CD8-positive, alpha-beta T cell (primary cell): ENCODE measurements at regions of chr4 and their contacts with region 1.

Region 1: GRCh38 chr4:56301181-56302076 is 85.9 kb downstream of the AASDH start:
- DNase-seq: peak; percentile 5 to 68 (median 51)
- ATAC-seq: peak; percentile 89
- H3K4me3 ChIP-seq: no peak overlapping the region
- H3K4me3 Mint-ChIP-seq: no peak overlapping the region
- H3K27ac ChIP-seq: no peak overlapping the region
- H3K27ac Mint-ChIP-seq: no peak overlapping the region
- H3K4me1 ChIP-seq: peaks cover 4% of the 10 kb centered on the region
- H3K4me1 Mint-ChIP-seq: peaks cover 9% of the 10 kb centered on the region
- H3K27me3 ChIP-seq: no peaks in the 10 kb centered on the region
- H3K27me3 Mint-ChIP-seq: no peaks in the 10 kb centered on the region
- CTCF ChIP-seq: peak; percentile 86

Region 2: DNA sequence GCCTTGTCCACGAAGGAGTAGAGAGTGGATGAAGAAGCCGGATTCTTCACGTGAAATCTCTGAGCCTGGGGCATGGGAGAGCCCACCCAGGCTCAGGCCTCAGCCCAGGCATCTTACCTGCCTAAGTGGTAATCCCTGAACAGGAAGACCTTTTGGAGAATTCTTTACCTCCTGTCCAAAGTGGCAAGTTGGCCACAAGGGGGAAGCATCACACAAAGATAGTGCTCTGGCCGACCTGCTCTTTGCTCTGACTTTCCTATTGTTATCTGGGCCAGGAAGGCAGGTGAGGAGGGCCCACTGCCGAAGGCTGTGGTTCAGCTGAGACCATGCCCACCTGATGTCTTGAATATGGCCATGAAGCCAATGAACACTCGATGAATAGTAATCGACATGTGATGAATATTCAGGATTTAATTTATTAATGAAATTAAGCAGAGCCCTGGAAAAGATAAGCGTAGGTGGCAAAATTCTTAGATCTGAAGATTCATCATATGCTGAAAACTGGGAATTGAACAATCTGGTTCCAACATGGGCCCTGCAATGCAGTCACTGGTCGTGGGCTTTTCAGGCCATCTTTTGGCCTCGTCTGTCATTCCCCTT is 1978.5 kb before region 1 on chr4:
- CTCF ChIA-PET with region 1: no interaction called
- POLR2A ChIA-PET with region 1: no interaction called
- intact Hi-C with region 1: loop called in 1 of 2 experiments (anchors 5 kb)
- DNase-seq: peak in 7 of 9 experiments; percentile 3 to 58 (median 42)
- ATAC-seq: peak; percentile 40
- H3K4me3 ChIP-seq: no peak overlapping the region
- H3K4me3 Mint-ChIP-seq: no peak overlapping the region
- H3K27ac ChIP-seq: no peak overlapping the region
- H3K27ac Mint-ChIP-seq: no peak overlapping the region
- H3K4me1 ChIP-seq: no peaks in the 10 kb centered on the region
- H3K4me1 Mint-ChIP-seq: no peaks in the 10 kb centered on the region
- H3K27me3 ChIP-seq: no peaks in the 10 kb centered on the region
- H3K27me3 Mint-ChIP-seq: no peaks in the 10 kb centered on the region
- CTCF ChIP-seq: peak; percentile 39

Region 3: DNA sequence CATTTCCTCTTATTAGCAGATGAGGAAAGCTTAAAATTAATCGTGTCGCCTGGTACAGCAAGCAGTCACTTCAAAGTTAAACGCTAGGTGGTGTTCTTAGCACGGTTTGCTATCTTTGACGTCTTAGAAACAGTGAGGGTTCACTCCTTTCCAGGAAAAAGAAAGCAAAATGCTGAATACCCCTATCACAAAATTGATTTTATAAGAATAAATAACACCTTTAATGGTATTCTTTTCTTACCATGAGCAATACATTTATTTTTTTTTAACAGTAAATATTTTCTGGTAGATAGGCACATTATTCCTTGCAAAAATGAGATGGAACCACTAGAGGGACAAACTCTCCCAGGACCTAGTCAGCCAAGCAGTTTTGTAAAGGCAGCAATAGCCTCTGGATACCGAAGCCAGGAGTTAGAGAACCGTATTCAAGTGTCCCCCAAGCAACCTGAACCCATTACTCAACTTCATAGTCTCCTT is 1329.9 kb before region 1 on chr4:
- CTCF ChIA-PET with region 1: no interaction called
- POLR2A ChIA-PET with region 1: no interaction called
- intact Hi-C with region 1: loop called in 1 of 2 experiments (anchors 2 kb)
- DNase-seq: peak in 2 of 9 experiments; percentile 21 to 44
- ATAC-seq: peak; percentile 51
- H3K4me3 ChIP-seq: no peak overlapping the region
- H3K4me3 Mint-ChIP-seq: no peak overlapping the region
- H3K27ac ChIP-seq: no peak overlapping the region
- H3K27ac Mint-ChIP-seq: no peak overlapping the region
- H3K4me1 ChIP-seq: no peaks in the 10 kb centered on the region
- H3K4me1 Mint-ChIP-seq: no peaks in the 10 kb centered on the region
- H3K27me3 ChIP-seq: no peaks in the 10 kb centered on the region
- H3K27me3 Mint-ChIP-seq: peaks cover 12% of the 10 kb centered on the region
- CTCF ChIP-seq: peak; percentile 63

Region 4: DNA sequence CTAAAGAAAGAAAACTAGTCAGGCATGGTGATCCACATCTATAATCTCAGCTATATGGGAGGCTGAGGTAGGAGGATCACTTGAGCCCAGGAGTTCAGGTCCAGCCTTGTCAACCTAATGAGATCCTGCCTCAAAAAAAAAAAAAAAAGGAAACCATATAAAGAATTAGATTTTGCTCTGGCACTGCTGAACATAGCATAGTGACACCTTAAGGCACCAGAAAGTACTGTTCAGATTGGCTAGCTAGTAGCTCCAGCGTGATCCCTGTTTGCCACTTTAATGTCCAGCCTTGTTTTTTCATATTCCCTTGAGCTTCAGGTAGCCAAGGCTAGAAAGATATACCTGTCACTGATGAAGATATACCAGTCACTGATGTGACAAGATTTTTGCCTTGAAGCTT is 413.8 kb before region 1 on chr4:
- CTCF ChIA-PET with region 1: no interaction called
- POLR2A ChIA-PET with region 1: no interaction called
- intact Hi-C with region 1: loop called in 1 of 2 experiments (anchors 5 kb)
- DNase-seq: no peak
- ATAC-seq: no peak
- H3K4me3 ChIP-seq: no peak overlapping the region
- H3K4me3 Mint-ChIP-seq: no peak overlapping the region
- H3K27ac ChIP-seq: no peak overlapping the region
- H3K27ac Mint-ChIP-seq: no peak overlapping the region
- H3K4me1 ChIP-seq: no peaks in the 10 kb centered on the region
- H3K4me1 Mint-ChIP-seq: peaks cover 27% of the 10 kb centered on the region
- H3K27me3 ChIP-seq: no peaks in the 10 kb centered on the region
- H3K27me3 Mint-ChIP-seq: no peaks in the 10 kb centered on the region
- CTCF ChIP-seq: no peak

Region 5: GRCh38 chr4:56129431-56129861 is 172.0 kb before region 1 on chr4:
- CTCF ChIA-PET with region 1: no interaction called
- POLR2A ChIA-PET with region 1: no interaction called
- intact Hi-C with region 1: loop called in 1 of 2 experiments (anchors 10 kb)
- DNase-seq: peak in 2 of 9 experiments; percentile 3 to 5
- ATAC-seq: no peak
- H3K4me3 ChIP-seq: no peak overlapping the region
- H3K4me3 Mint-ChIP-seq: no peak overlapping the region
- H3K27ac ChIP-seq: no peak overlapping the region
- H3K27ac Mint-ChIP-seq: no peak overlapping the region
- H3K4me1 ChIP-seq: no peaks in the 10 kb centered on the region
- H3K4me1 Mint-ChIP-seq: no peaks in the 10 kb centered on the region
- H3K27me3 ChIP-seq: no peaks in the 10 kb centered on the region
- H3K27me3 Mint-ChIP-seq: peaks cover 6% of the 10 kb centered on the region
- CTCF ChIP-seq: no peak